ENCODE measurements at regions of chr6 and their contacts with region 1.

Region 1: GRCh38 chr6:11224252-11224965 is 8.1 kb downstream of the NEDD9 start:
- DNase-seq: peak; percentile 67
- ATAC-seq: peak; percentile 94
- H3K4me3 Mint-ChIP-seq: peak overlapping the region; percentile 10
- H3K27ac Mint-ChIP-seq: peak overlapping the region; percentile 75
- H3K4me1 Mint-ChIP-seq: peaks cover 51% of the 10 kb centered on the region
- H3K27me3 Mint-ChIP-seq: no peaks in the 10 kb centered on the region

Region 2: DNA sequence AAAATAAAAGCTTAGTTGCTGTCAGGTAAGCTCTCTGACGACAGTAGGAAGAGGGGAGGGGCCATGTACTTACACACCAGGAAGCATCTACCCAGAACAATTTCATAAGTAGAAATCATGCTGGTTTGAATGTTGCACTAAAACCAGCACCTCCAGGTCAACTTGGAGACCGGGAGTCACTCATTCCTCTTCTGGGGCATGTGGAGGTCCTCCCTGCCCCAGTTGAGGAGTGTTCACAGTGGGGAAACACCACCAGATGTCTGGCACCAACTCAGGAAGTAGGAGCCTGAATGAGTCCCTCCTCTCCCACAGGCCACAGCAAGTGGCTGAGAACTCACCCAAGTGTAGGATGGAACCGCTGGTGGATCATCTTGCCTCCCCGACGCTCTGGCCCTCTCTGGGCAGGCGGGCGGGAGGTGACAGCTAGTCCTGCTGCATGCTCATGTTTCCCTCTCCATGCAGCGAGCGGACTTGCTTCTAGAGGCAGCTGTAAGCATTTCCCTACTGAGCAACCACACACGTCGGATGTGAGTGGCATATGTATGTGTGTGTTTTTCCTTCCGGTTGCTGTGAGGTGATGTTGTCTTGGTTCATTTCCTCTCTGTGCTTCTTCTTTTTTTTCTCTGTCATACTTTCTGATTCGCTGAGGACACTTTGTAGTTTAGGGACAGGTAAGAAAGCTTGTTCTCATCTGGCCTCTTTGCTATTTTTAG is 157.5 kb after region 1 on chr6:
- CTCF ChIA-PET with region 1: interaction called, 5 read pairs
- POLR2A ChIA-PET with region 1: no interaction called
- intact Hi-C with region 1: loop called in 1 of 2 experiments (anchors 1 kb)
- DNase-seq: peak; percentile 80
- ATAC-seq: peak; percentile 93
- H3K4me3 Mint-ChIP-seq: peak overlapping the region; percentile 78
- H3K27ac Mint-ChIP-seq: peak overlapping the region; percentile 88
- H3K4me1 Mint-ChIP-seq: peaks cover 56% of the 10 kb centered on the region
- H3K27me3 Mint-ChIP-seq: peaks cover 2% of the 10 kb centered on the region